ENCODE measurements at regions of chr22 and their contacts with region 1.

Region 1: DNA sequence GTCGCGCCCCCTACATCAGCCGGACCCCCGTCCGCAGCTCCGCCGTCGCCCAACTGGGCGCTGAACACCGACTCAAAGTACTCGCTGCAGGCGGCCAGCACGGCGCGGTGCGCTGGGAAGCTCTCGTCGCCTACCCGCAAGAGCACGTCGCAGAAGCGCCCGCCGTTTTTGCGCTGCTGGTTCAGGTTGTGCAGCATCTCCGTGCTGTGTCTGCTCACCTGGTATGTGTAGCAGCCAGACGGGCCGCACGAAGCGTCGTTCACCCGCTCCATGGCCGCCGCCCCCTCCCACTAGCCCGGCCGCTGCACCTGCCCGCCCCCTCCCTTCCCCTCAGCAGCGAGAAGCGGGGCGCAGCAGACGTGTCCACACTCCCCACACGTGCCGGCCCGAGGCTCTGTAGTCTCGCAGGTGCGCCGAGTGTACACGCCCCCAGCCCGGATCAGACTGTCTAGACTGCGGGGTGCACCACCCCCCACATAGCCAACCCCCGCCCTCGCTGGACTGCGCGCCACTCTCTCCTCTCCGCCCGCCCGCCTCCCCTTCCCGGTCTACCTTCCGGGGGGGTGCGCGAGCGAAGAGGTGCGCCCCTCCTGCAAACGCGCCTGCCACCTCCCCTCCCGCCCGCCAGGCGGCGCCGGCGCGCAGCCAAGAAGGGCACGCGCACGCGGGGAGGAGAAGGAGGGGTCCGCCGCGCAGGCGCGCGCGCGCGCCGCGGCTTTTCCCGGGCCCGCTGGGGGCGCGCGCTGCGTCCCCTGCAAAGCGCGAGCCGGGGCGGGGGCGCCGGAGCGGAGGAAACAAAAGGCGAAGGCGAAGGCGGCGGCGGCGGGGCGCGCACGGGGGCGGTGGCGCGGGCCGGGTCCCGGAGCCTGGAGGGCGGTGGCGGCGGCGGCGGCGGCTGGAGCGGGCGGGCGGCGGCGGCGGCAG is 553 bp downstream of the PATZ1 start:
- DNase-seq: peak; percentile 78 to 97 (median 90)
- ATAC-seq: peak; percentile 77
- H3K4me3 ChIP-seq: peak overlapping the region; percentile 63 to 72
- H3K4me3 Mint-ChIP-seq: peak overlapping the region; percentile 90
- H3K27ac ChIP-seq: peak overlapping the region; percentile 51 to 70
- H3K27ac Mint-ChIP-seq: peak overlapping the region; percentile 93
- H3K4me1 ChIP-seq: peaks cover 52% of the 10 kb centered on the region
- H3K4me1 Mint-ChIP-seq: peaks cover 52% of the 10 kb centered on the region
- H3K27me3 ChIP-seq: no peaks in the 10 kb centered on the region
- H3K27me3 Mint-ChIP-seq: no peaks in the 10 kb centered on the region
- CTCF ChIP-seq: peak; percentile 82

Region 2: GRCh38 chr22:29603358-29604075 is 1742.1 kb before region 1 on chr22 and contains the start of gene NF2:
- CTCF ChIA-PET with region 1: no interaction called
- POLR2A ChIA-PET with region 1: no interaction called
- intact Hi-C with region 1: loop called in 1 of 2 experiments (anchors 5 kb)
- DNase-seq: peak; percentile 96 to 100 (median 98)
- ATAC-seq: peak; percentile 98
- H3K4me3 ChIP-seq: peak within 1 kb of the TSS; percentile 77 to 86
- H3K4me3 Mint-ChIP-seq: peak within 1 kb of the TSS; percentile 93
- H3K27ac ChIP-seq: peak within 1 kb of the TSS; percentile 84 to 90
- H3K27ac Mint-ChIP-seq: peak within 1 kb of the TSS; percentile 97
- H3K4me1 ChIP-seq: peaks cover 18% of the 10 kb centered on the region
- H3K4me1 Mint-ChIP-seq: peaks cover 25% of the 10 kb centered on the region
- H3K27me3 ChIP-seq: no peaks in the 10 kb centered on the region
- H3K27me3 Mint-ChIP-seq: no peaks in the 10 kb centered on the region
- CTCF ChIP-seq: no peak
- total RNA-seq, gene NF2: 22.6 to 23.2 TPM

Region 3: GRCh38 chr22:31160328-31160978 is 185.1 kb before region 1 on chr22:
- CTCF ChIA-PET with region 1: no interaction called
- POLR2A ChIA-PET with region 1: no interaction called
- intact Hi-C with region 1: loop called (anchors 1 to 2 kb)
- DNase-seq: peak in 6 of 9 experiments; percentile 11 to 55 (median 28)
- ATAC-seq: peak; percentile 34
- H3K4me3 ChIP-seq: peak overlapping the region; percentile 78 to 86
- H3K4me3 Mint-ChIP-seq: peak overlapping the region; percentile 100
- H3K27ac ChIP-seq: peak overlapping the region; percentile 72 to 90
- H3K27ac Mint-ChIP-seq: peak overlapping the region; percentile 98
- H3K4me1 ChIP-seq: peaks cover 26% of the 10 kb centered on the region
- H3K4me1 Mint-ChIP-seq: peaks cover 38% of the 10 kb centered on the region
- H3K27me3 ChIP-seq: no peaks in the 10 kb centered on the region
- H3K27me3 Mint-ChIP-seq: no peaks in the 10 kb centered on the region
- CTCF ChIP-seq: no peak

Region 4: DNA sequence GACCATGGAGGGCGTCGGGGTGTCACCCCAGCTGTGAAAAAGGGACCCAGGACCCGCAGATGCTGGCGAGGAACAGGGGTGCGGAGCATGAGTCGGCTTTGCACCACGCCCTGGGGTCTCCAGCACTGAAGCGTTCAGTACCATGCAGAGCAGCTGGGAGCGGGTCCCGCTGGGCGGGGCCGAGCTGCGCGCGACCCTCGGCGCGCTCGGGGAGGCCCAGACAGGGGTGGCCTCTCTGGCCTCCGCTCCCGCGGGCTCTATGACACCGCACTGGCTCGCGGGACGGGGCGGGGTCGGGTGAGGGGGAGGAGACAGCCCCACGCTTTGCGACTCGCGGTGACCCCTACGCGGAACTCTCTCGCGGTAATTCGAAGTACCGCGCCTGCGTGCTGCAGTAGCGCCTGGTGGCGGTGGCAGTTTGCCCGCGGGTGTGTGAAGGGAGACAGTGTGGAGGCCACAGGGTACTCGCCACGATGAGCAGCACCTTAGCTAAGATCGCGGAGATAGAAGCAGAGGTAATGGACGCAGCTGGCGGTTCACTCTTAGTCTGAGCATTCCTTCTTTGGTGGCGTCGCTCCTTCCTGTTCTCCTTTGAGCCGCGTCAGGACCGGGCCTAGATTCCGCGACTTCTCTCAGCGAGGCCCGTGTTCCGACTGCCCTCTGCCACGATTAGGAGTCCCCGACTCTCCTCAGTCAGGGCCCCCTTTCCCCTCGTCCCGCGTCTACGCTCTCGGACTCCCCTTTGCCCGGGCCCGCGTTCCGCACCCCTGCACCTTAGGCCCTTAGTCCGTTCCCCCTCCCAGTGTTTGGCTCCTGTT is 53.8 kb after region 1 on chr22 and contains the start of gene DRG1:
- CTCF ChIA-PET with region 1: no interaction called
- POLR2A ChIA-PET with region 1: interaction called, 14 read pairs
- intact Hi-C with region 1: loop called (anchors 1 kb)
- DNase-seq: peak; percentile 91 to 98 (median 97)
- ATAC-seq: peak; percentile 96
- H3K4me3 ChIP-seq: peak within 1 kb of the TSS; percentile 76 to 99
- H3K4me3 Mint-ChIP-seq: peak within 1 kb of the TSS; percentile 95
- H3K27ac ChIP-seq: peak within 1 kb of the TSS; percentile 82 to 87
- H3K27ac Mint-ChIP-seq: peak within 1 kb of the TSS; percentile 96
- H3K4me1 ChIP-seq: peaks cover 13% of the 10 kb centered on the region
- H3K4me1 Mint-ChIP-seq: peaks cover 31% of the 10 kb centered on the region
- H3K27me3 ChIP-seq: no peaks in the 10 kb centered on the region
- H3K27me3 Mint-ChIP-seq: no peaks in the 10 kb centered on the region
- CTCF ChIP-seq: no peak
- total RNA-seq, gene DRG1: 55.9 to 63.3 TPM

Region 5: DNA sequence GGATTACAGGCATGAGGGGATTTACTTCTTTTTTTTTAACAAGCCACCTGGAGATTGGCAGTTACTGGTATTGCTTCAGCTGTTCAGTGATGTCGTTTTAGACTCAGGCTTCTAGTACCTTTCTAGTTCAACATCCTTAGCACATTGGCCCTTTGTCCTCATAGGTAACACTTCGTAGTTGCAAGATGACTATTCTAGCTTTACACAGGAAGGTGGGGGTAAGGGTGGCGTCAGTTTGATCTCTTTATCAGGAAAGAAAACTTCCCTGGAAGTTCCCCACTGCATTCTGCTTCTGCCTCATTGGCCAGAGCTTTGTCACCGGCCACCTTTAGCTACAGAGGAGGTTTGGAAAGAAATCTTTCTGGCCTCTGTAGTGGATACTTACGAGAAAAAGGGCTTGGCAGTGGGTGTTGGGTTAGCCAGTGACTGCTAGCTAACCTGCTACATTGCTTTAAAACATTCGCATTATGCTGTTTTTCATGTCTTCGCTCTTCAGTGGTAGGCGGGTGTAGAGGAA is 191.5 kb after region 1 on chr22:
- CTCF ChIA-PET with region 1: no interaction called
- POLR2A ChIA-PET with region 1: no interaction called
- intact Hi-C with region 1: no loop called
- DNase-seq: peak in 2 of 9 experiments; percentile 17 to 55
- ATAC-seq: peak; percentile 55
- H3K4me3 ChIP-seq: no peak overlapping the region
- H3K4me3 Mint-ChIP-seq: no peak overlapping the region
- H3K27ac ChIP-seq: peak overlapping the region in 1 of 2 experiments; percentile 54
- H3K27ac Mint-ChIP-seq: peak overlapping the region; percentile 69
- H3K4me1 ChIP-seq: peaks cover 3% of the 10 kb centered on the region
- H3K4me1 Mint-ChIP-seq: peaks cover 37% of the 10 kb centered on the region
- H3K27me3 ChIP-seq: no peaks in the 10 kb centered on the region
- H3K27me3 Mint-ChIP-seq: no peaks in the 10 kb centered on the region
- CTCF ChIP-seq: no peak

Region 6: GRCh38 chr22:31630331-31631329 is 285.0 kb after region 1 on chr22:
- CTCF ChIA-PET with region 1: interaction called, 6 read pairs
- POLR2A ChIA-PET with region 1: interaction called, 6 read pairs
- intact Hi-C with region 1: loop called in 1 of 2 experiments (anchors 1 kb)
- DNase-seq: peak; percentile 69 to 94 (median 87)
- ATAC-seq: peak; percentile 92
- H3K4me3 ChIP-seq: peak overlapping the region; percentile 77 to 79
- H3K4me3 Mint-ChIP-seq: peak overlapping the region; percentile 90
- H3K27ac ChIP-seq: peak overlapping the region; percentile 85 to 98
- H3K27ac Mint-ChIP-seq: peak overlapping the region; percentile 94
- H3K4me1 ChIP-seq: peaks cover 40% of the 10 kb centered on the region
- H3K4me1 Mint-ChIP-seq: peaks cover 51% of the 10 kb centered on the region
- H3K27me3 ChIP-seq: no peaks in the 10 kb centered on the region
- H3K27me3 Mint-ChIP-seq: no peaks in the 10 kb centered on the region
- CTCF ChIP-seq: no peak

Measured in CD8-positive, alpha-beta T cell (primary cell).